ENCODE measurements at regions of chr17 and their contacts with region 1.

Region 1: DNA sequence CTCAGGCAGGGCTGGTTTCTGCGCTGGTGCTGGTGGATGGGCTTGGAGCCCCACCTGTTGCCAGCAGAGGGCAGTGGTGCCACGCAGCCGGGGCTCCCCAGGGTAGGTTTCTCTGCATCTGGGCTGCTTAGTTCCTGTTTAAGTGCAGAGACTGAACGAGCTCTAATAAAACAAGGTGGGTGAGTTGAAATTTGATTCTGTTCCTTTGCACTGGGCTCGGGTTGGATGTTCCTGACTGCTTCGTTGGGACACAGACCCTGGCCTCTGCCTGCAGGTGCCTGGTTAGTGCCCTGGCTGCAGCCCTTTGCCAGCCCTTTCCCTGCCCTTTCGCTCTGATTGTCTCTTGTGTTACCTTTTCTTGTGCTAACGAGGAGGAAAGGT is 30.0 kb downstream of the TBCD start:
- DNase-seq: peak; percentile 19 to 90
- H3K4me3 ChIP-seq: no peak overlapping the region
- H3K27ac ChIP-seq: no peak overlapping the region
- H3K4me1 ChIP-seq: peaks cover 0 to 4% (median 1%) of the 10 kb centered on the region in 4 experiments; a peak in 2 of 7 replicates
- H3K27me3 ChIP-seq: no peaks in the 10 kb centered on the region
- CTCF ChIP-seq: peak; percentile 90 to 96 (median 95)
- EP300 ChIP-seq: no peak
- POLR2A ChIP-seq: no peak
- RAD21 ChIP-seq: peak; percentile 91 to 92

Region 2: GRCh38 chr17:82648166-82648668 is 133.7 kb before region 1 on chr17 and contains the start of gene WDR45B:
- CTCF ChIA-PET with region 1: no interaction called
- POLR2A ChIA-PET with region 1: no interaction called
- DNase-seq: peak; percentile 89 to 91
- H3K4me3 ChIP-seq: peak within 1 kb of the TSS; percentile 69 to 94 (median 80)
- H3K27ac ChIP-seq: peak within 1 kb of the TSS; percentile 89; the same call in 1 of the 2 replicates
- H3K4me1 ChIP-seq: peaks cover 0 to 8% (median 3%) of the 10 kb centered on the region in 4 experiments; a peak in 5 of 7 replicates
- H3K27me3 ChIP-seq: no peaks in the 10 kb centered on the region; a peak in 1 of 7 replicates
- CTCF ChIP-seq: no peak
- EP300 ChIP-seq: peak in 1 of 2 experiments; percentile 11; a peak in 1 of 3 replicates
- POLR2A ChIP-seq: peak in 1 of 2 experiments; percentile 92; a peak in 2 of 3 replicates
- RAD21 ChIP-seq: no peak
- total RNA-seq, gene WDR45B: 82.0 and 88.8 TPM in 2 replicates

Region 3: DNA sequence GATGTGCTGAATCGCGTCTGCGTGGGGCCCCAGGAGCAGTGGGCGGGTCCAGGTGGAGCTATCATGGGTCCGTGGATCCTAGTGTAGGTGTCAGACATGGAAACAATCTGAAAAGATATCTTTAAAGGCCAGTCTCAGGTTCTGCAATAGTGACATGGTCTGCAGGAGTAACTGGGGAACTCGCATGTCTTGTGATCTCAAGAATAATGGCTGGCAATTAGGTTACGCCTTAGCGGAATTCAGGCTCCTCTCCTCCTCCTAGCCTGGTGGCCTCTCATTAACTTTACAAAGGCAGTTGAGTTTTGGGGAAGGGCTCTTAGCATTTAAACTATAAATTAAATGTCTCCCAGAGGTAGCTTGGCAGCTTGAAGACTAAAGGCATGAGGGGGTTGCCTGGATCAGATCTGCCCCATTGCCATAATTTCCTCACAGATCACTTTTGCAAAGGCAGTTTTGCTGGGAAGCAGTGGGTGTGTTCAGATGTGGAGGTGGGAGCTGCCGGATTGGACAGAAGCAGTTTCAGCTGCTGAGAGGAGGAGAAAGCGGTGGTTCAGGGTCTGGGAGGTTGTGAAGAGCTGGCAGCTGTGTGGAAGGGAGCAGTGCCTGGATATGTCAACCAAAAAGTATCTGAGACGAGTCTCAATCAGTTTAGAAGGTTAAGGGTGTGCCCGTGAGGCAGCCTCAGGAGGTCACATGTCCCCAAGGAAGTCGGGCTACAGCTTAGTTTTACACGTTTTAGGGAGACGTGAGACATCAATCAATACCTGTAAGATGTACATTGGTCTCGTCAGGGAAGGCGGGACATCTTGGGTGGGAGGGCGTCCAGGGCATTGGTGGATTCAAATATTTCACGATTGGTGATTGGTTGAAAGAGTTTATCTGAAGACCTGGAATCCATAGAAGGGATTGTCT is 27.3 kb before region 1 on chr17:
- CTCF ChIA-PET with region 1: interaction called, 11 read pairs
- POLR2A ChIA-PET with region 1: no interaction called
- DNase-seq: peak; percentile 61 to 68
- H3K4me3 ChIP-seq: peak overlapping the region; percentile 13 to 51 (median 24); a peak in 7 of 8 replicates
- H3K27ac ChIP-seq: peak overlapping the region; percentile 76
- H3K4me1 ChIP-seq: peaks cover 8 to 23% (median 16%) of the 10 kb centered on the region in 4 experiments
- H3K27me3 ChIP-seq: peaks cover 0 to 6% (median 3%) of the 10 kb centered on the region in 4 experiments; a peak in 3 of 7 replicates
- CTCF ChIP-seq: no peak
- EP300 ChIP-seq: no peak
- POLR2A ChIP-seq: no peak; a peak in 1 of 3 replicates
- RAD21 ChIP-seq: no peak

Region 4: GRCh38 chr17:82830249-82830661 is 48.4 kb after region 1 on chr17:
- CTCF ChIA-PET with region 1: interaction called, 14 read pairs
- POLR2A ChIA-PET with region 1: no interaction called
- DNase-seq: no peak
- H3K4me3 ChIP-seq: no peak overlapping the region
- H3K27ac ChIP-seq: no peak overlapping the region
- H3K4me1 ChIP-seq: no peaks in the 10 kb centered on the region; a peak in 1 of 7 replicates
- H3K27me3 ChIP-seq: no peaks in the 10 kb centered on the region
- CTCF ChIP-seq: no peak
- EP300 ChIP-seq: no peak
- POLR2A ChIP-seq: no peak
- RAD21 ChIP-seq: no peak

Region 5: GRCh38 chr17:82871056-82871903 is 89.4 kb after region 1 on chr17:
- CTCF ChIA-PET with region 1: interaction called, 11 read pairs
- POLR2A ChIA-PET with region 1: no interaction called
- DNase-seq: no peak
- H3K4me3 ChIP-seq: no peak overlapping the region
- H3K27ac ChIP-seq: no peak overlapping the region
- H3K4me1 ChIP-seq: peaks cover 0 to 8% (median 2%) of the 10 kb centered on the region in 4 experiments; a peak in 5 of 7 replicates
- H3K27me3 ChIP-seq: no peaks in the 10 kb centered on the region
- CTCF ChIP-seq: peak; percentile 41 to 59 (median 42)
- EP300 ChIP-seq: no peak
- POLR2A ChIP-seq: no peak
- RAD21 ChIP-seq: no peak; a peak in 1 of 4 replicates

Region 6: DNA sequence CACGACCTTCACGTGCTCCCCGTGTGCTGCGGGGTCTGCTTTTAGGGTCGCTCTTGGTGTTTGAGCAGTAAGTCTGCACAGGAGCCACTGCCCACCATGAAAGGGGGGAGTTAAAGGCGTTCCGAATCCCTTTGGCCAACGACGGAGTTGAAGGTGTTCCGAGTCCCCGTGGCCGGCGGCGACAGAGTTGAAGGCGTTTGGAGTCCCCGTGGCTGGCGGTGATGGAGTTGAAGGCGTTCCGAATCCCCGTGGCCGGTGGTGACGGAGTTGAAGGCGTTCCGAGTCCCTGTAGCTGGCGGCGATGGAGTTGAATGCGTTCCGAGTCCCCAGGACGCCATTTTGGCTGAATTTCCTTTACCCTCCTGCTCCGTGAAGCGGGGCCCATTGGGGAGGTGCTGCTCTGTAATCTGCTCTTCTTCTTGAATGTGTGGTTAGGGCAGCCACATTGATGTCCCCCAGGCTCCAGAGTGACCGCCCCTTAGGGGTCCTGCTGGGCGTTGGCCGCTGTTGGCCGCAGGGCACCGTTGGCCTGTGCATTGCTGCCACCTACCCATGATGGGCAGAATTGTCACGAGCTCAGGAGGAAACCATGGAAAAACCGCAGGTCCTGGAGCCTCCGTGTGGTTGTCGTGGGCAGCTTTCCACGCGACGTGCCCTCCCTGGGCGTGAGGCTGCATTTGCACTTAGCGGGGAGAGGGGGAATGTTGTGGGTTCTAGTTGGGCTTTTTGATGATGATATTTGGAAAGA is 131.6 kb after region 1 on chr17:
- CTCF ChIA-PET with region 1: interaction called, 16 read pairs
- POLR2A ChIA-PET with region 1: no interaction called
- DNase-seq: no peak
- H3K4me3 ChIP-seq: no peak overlapping the region
- H3K27ac ChIP-seq: no peak overlapping the region
- H3K4me1 ChIP-seq: no peaks in the 10 kb centered on the region
- H3K27me3 ChIP-seq: no peaks in the 10 kb centered on the region
- CTCF ChIP-seq: peak; percentile 48 to 66 (median 56)
- EP300 ChIP-seq: no peak
- POLR2A ChIP-seq: no peak
- RAD21 ChIP-seq: peak; percentile 59 to 67